Sciatic nerve (tissue), 2 donors: ENCODE measurements at regions of chr11 and their contacts with region 1.

Region 1: DNA sequence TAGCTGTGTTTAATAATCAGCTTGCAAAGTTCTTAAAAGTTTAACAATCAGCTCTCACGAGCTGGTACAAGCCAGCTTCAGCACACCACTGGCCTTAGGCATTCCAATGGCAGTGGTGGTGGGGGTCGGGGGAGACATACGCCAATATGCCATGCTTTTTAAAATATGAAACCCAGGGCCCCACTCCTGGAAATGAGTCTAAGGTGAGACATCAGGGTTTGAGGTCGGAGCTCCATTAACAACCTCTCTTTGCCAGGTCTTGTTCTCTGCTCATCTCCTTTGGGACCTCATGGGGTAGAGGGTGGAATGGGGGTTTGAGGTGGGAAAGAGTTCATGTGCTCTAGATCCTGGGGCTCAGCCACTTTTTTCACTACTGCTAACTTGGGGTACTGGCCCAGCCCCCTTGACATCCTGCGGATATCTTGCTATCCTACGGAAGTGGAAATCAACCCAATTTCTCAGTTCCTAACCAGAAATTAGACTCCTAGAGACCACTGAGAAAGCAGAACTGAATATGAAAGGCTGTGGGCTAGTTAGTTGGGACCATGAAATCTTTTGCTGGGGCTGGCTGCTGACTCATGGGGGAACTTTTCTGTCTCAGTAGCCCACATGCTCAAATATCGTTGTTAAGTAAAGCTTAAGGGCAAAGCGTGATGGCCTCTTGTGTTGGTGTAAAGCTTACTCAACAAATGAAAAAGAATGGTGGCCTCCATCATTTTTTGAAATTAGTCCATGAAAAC is 90.1 kb downstream of the PDHX start:
- DNase-seq: no peak
- ATAC-seq: no peak

Region 2: DNA sequence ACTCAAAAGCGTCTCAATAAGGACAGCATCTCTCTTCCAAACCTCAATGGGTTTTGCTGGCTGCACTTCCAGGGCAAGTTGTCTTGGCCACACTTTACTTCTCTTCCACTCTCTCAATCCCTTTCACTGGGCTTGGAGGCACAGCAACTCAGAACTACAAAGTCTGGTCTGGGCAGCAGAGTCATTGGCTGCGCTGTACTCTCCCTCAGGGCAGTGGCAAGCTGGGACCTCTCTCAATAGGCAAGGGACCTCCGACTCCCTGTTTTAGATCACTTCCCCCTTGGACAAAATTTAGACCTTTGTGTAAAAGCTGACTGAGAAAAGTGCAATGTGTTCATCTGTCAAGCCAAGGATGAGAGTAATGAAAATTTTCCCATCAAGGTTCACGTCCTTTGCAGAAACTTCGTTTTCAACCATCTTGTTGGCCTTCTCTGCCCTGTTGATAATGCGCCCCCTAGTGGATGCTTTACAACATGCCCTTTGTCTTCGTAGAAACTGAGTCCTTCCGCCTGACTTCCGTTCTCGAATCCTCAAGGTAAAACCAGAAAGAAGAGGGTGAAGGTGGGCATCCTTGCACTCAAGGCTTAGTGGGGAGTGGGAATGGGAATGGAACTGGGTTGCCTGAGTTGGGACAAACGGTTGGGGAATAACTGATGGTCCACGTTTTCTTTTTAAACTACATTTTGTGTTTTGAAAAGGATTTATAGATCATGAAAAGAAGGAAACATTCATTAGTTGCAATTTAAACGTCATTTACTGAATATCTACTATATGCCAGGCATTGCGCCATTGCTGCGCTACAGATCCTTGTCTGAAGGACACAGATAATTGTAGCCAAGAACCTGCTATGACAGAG is 231.5 kb after region 1 on chr11:
- intact Hi-C with region 1: loop called (anchors 10 kb)
- DNase-seq: peak; percentile 63
- ATAC-seq: peak; percentile 56